ENCODE measurements at regions of chr7 and their contacts with region 1.

Region 1: GRCh38 chr7:102272075-102272917 is 14.4 kb upstream of the SH2B2 start:
- DNase-seq: peak; percentile 74
- H3K4me3 Mint-ChIP-seq: no peak overlapping the region
- H3K27ac Mint-ChIP-seq: no peak overlapping the region
- H3K4me1 Mint-ChIP-seq: no peaks in the 10 kb centered on the region
- H3K27me3 Mint-ChIP-seq: no peaks in the 10 kb centered on the region

Region 2: GRCh38 chr7:101542527-101543241 is 729.6 kb before region 1 on chr7:
- CTCF ChIA-PET with region 1: interaction called, 11 read pairs
- POLR2A ChIA-PET with region 1: no interaction called
- DNase-seq: peak; percentile 71
- H3K4me3 Mint-ChIP-seq: no peak overlapping the region
- H3K27ac Mint-ChIP-seq: no peak overlapping the region
- H3K4me1 Mint-ChIP-seq: no peaks in the 10 kb centered on the region
- H3K27me3 Mint-ChIP-seq: no peaks in the 10 kb centered on the region

Region 3: GRCh38 chr7:101602484-101603241 is 669.6 kb before region 1 on chr7:
- CTCF ChIA-PET with region 1: interaction called, 10 read pairs
- POLR2A ChIA-PET with region 1: no interaction called
- DNase-seq: peak; percentile 70
- H3K4me3 Mint-ChIP-seq: no peak overlapping the region
- H3K27ac Mint-ChIP-seq: no peak overlapping the region
- H3K4me1 Mint-ChIP-seq: no peaks in the 10 kb centered on the region
- H3K27me3 Mint-ChIP-seq: no peaks in the 10 kb centered on the region

Region 4: DNA sequence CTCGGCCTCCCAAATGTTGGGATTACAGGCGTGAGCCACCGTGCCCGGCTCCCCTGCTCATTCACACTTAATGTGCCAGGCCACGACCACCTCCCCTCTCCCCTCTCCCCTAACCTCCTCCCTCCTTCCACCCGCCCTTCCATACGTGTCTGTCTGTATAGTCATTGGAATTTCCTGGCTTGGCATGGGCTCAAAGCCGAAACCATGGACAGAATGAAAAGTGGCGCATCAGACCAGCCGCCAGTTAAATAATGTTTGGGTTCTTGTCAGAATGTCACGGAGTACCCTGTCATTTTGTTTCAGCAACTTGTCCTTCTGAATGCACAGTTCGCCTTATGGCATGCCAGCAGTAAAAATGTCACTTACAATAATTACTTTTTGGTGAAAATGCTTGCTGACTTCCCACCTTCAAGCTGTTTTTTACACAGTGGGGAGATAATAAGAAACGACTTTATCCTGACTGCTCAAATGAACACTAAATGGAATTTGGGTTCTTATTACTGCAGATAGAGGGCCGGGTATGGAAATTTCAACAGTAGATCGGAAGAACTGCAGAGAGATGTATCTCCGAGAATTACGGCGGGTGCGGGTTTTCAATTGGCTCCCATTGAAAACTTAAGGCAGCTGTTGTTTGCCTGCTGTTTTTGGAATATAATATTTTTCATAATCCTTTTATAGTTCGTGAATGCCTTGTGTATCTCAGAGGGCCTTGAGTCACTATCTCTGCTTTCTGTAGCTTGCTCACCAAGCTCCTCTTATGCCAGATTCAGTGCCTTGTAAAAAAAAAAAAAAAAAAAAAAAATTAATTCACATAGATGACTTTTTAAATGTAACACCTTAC is 51.1 kb before region 1 on chr7:
- CTCF ChIA-PET with region 1: no interaction called
- POLR2A ChIA-PET with region 1: no interaction called
- DNase-seq: no peak
- H3K4me3 Mint-ChIP-seq: no peak overlapping the region
- H3K27ac Mint-ChIP-seq: no peak overlapping the region
- H3K4me1 Mint-ChIP-seq: no peaks in the 10 kb centered on the region
- H3K27me3 Mint-ChIP-seq: no peaks in the 10 kb centered on the region

Region 5: DNA sequence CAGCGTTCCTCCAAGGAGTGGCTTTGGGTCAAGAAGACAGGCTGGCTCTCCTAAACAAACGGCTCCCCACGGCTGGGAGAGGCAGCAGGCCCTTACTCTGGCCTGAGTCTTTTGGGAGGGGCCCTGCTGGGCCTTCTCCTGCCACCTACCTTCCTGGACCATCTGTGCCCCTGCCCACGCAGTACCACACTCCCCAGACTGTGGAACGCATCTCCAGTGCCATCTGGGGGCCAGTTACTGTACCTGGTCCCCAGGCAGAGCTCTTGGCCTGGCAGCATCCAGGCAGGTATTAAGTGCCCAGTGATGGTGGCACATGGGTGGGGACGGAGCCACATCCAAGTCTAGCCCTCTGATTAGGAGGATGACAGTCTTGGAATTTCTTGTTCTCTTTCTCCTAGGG is 177.9 kb after region 1 on chr7:
- CTCF ChIA-PET with region 1: no interaction called
- POLR2A ChIA-PET with region 1: no interaction called
- DNase-seq: peak; percentile 48
- H3K4me3 Mint-ChIP-seq: no peak overlapping the region
- H3K27ac Mint-ChIP-seq: no peak overlapping the region
- H3K4me1 Mint-ChIP-seq: no peaks in the 10 kb centered on the region
- H3K27me3 Mint-ChIP-seq: no peaks in the 10 kb centered on the region